ENCODE measurements at regions of chr6 and their contacts with region 1.

Region 1: DNA sequence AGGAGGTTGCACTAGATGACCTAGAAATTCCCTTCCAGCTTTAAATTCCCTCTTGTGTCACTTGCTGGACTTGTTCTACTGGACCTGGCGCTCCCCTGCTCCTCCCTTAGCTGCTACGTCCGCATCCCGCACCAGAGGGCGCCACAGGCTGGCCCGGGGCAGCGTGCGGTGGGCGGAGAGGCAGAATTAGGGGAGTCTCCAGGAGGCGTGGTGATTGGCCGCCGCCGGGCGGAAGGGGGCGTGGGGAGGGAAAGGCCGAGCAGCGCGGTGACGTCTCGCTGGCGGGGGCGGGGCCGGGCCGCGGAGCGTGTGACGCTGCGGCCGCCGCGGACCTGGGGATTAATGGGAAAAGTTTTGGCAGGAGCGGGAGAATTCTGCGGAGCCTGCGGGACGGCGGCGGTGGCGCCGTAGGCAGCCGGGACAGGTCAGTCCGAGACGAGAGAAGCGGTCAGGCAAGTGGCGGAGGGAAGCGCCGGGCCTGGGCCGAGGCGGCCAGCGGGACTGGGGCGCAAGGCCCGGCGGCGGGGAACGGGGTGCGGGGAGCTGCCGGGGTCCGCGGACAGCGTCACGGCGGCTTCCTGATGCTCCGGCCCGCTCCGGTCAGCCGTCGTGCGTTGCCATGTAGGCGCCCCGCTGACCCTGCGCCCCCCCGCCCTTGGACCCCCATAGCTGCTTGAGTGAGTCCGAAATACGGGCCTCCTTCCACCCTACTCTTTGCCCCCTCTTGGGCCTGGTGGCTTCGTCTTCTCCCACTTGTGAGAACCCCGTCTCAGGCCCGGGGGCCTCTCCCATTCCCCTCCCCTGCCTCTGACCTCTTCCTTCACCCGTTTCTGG is at the start of gene PPARD:
- DNase-seq: peak; percentile 97 to 98
- ATAC-seq: peak; percentile 88 to 92
- H3K4me3 ChIP-seq: peak within 1 kb of the TSS; percentile 64 to 93 (median 70)
- H3K27ac ChIP-seq: peak within 1 kb of the TSS; percentile 81 to 95 (median 94)
- H3K4me1 ChIP-seq: peaks cover 41 to 45% of the 10 kb centered on the region in 2 donors
- H3K27me3 ChIP-seq: no peaks in the 10 kb centered on the region
- CTCF ChIP-seq: peak; percentile 97 to 100 (median 99)
- POLR2A ChIP-seq: peak; percentile 96 to 97
- total RNA-seq, gene PPARD: 6.3 to 16.7 (median 12.0) TPM

Region 2: DNA sequence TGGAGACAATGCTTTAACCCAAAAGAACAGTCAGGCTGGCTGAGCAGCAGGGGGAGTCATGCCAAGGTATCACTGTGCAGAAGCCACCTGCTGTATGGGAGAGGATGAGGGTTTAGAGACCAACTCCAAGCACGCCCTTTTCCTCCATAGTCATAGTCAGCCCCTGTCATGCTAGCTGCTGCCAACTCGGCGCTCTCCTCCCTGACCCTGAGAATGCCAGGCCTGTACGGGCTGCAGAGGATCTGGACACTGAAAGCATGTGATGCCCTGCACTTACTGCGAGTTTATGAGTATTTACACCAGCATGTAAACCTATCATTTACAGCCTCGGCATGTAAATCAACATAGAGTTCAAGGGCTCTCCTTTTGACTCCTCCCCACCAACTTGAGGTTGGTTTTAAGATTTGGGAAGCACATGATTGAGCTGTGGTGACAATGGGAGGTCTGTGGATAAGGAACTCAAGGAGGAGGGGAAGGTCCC is 140.4 kb before region 1 on chr6:
- in situ Hi-C with region 1: no loop called
- intact Hi-C with region 1: no loop called
- DNase-seq: no peak
- ATAC-seq: no peak
- H3K4me3 ChIP-seq: no peak overlapping the region
- H3K27ac ChIP-seq: no peak overlapping the region
- H3K4me1 ChIP-seq: no peaks in the 10 kb centered on the region
- H3K27me3 ChIP-seq: peaks cover 0 to 13% (median 12%) of the 10 kb centered on the region in 3 donors
- CTCF ChIP-seq: no peak
- POLR2A ChIP-seq: no peak

Region 3: DNA sequence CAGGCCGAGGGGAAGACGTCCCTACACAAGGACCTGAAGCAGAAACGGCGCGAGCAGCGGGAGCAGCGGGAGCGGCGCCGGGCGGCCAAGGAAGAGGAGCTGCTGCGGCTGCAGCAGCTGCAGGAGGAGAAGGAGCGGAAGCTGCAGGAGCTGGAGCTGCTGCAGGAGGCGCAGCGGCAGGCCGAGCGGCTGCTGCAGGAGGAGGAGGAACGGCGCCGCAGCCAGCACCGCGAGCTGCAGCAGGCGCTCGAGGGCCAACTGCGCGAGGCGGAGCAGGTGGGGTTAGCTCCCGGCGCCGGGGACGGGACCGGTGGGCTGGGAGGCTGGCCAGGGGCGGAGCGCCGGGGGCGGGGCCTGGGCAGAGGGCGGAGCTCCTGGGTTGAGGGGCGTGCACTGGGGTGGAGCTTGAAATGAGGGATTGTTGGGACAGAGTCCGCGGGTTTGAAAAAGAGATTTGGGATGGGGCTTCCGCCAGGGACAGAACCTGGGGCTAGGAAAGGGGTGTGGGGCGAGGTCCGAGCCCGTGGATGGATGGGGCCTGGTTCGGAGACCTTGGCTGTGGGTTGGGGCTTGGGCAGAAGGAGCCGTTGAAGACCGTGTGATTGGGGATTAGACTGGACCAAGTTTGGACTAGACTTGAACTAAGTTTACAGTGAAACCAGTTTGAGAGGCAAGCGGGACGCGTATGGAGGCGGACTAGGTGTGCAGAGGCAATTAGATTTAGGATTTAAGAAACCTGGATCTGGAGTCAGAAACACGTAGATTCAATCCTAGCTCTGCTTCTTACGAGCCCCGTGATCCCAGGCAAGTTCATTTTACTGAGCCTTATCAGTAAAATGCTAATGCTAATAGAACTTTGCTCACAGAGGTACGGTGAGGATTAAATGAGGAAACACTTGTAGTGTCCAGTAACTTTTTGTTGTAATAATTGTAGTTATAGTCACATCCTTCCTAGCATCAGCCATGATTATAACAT is 24.0 kb before region 1 on chr6:
- in situ Hi-C with region 1: no loop called
- intact Hi-C with region 1: loop called (anchors 1 kb)
- DNase-seq: peak; percentile 56 to 78
- ATAC-seq: peak; percentile 91 to 94
- H3K4me3 ChIP-seq: peak overlapping the region; percentile 58 to 74 (median 68)
- H3K27ac ChIP-seq: peak overlapping the region; percentile 53 to 58 (median 54)
- H3K4me1 ChIP-seq: peaks cover 3 to 10% of the 10 kb centered on the region in 2 donors
- H3K27me3 ChIP-seq: no peaks in the 10 kb centered on the region
- CTCF ChIP-seq: peak in 2 of 5 experiments; percentile 14 to 20
- POLR2A ChIP-seq: peak in 1 of 2 donors; percentile 34

Region 4: GRCh38 chr6:35370124-35370741 is 27.8 kb after region 1 on chr6:
- in situ Hi-C with region 1: no loop called
- intact Hi-C with region 1: loop called (anchors 1 kb)
- DNase-seq: peak; percentile 92 to 98
- ATAC-seq: peak; percentile 92 to 95
- H3K4me3 ChIP-seq: peak overlapping the region in 2 of 4 donors; percentile 2 to 6
- H3K27ac ChIP-seq: peak overlapping the region; percentile 87 to 94 (median 92)
- H3K4me1 ChIP-seq: peaks cover 60 to 63% of the 10 kb centered on the region in 2 donors
- H3K27me3 ChIP-seq: no peaks in the 10 kb centered on the region
- CTCF ChIP-seq: peak in 1 of 5 experiments; percentile 26
- POLR2A ChIP-seq: peak; percentile 58 to 69

Region 5: GRCh38 chr6:35415065-35415991 is 72.9 kb after region 1 on chr6:
- in situ Hi-C with region 1: no loop called
- intact Hi-C with region 1: loop called (anchors 1 kb)
- DNase-seq: peak; percentile 65 to 78
- ATAC-seq: peak; percentile 92 to 97
- H3K4me3 ChIP-seq: no peak overlapping the region
- H3K27ac ChIP-seq: peak overlapping the region in 2 of 4 donors; percentile 7 to 48
- H3K4me1 ChIP-seq: peaks cover 10 to 16% of the 10 kb centered on the region in 2 donors
- H3K27me3 ChIP-seq: no peaks in the 10 kb centered on the region
- CTCF ChIP-seq: peak; percentile 41 to 79 (median 68)
- POLR2A ChIP-seq: no peak

Region 6: GRCh38 chr6:35427851-35428321 is 85.4 kb after region 1 on chr6:
- in situ Hi-C with region 1: no loop called
- intact Hi-C with region 1: no loop called
- DNase-seq: no peak
- ATAC-seq: no peak
- H3K4me3 ChIP-seq: no peak overlapping the region
- H3K27ac ChIP-seq: no peak overlapping the region
- H3K4me1 ChIP-seq: no peaks in the 10 kb centered on the region
- H3K27me3 ChIP-seq: no peaks in the 10 kb centered on the region
- CTCF ChIP-seq: no peak
- POLR2A ChIP-seq: no peak

Region 7: GRCh38 chr6:35452186-35453090 is 110.0 kb after region 1 on chr6 and contains the start of gene FANCE:
- in situ Hi-C with region 1: loop called (anchors 5 to 10 kb)
- intact Hi-C with region 1: loop called (anchors 1 kb)
- DNase-seq: peak; percentile 88 to 93
- ATAC-seq: peak; percentile 69 to 72
- H3K4me3 ChIP-seq: peak within 1 kb of the TSS; percentile 62 to 77 (median 72)
- H3K27ac ChIP-seq: peak within 1 kb of the TSS; percentile 81 to 89 (median 82)
- H3K4me1 ChIP-seq: peaks cover 34 to 40% of the 10 kb centered on the region in 2 donors
- H3K27me3 ChIP-seq: no peaks in the 10 kb centered on the region
- CTCF ChIP-seq: peak in 1 of 5 experiments; percentile 12
- POLR2A ChIP-seq: peak; percentile 80 to 86
- total RNA-seq, gene FANCE: 2.5 to 10.5 (median 5.9) TPM

Region 8: DNA sequence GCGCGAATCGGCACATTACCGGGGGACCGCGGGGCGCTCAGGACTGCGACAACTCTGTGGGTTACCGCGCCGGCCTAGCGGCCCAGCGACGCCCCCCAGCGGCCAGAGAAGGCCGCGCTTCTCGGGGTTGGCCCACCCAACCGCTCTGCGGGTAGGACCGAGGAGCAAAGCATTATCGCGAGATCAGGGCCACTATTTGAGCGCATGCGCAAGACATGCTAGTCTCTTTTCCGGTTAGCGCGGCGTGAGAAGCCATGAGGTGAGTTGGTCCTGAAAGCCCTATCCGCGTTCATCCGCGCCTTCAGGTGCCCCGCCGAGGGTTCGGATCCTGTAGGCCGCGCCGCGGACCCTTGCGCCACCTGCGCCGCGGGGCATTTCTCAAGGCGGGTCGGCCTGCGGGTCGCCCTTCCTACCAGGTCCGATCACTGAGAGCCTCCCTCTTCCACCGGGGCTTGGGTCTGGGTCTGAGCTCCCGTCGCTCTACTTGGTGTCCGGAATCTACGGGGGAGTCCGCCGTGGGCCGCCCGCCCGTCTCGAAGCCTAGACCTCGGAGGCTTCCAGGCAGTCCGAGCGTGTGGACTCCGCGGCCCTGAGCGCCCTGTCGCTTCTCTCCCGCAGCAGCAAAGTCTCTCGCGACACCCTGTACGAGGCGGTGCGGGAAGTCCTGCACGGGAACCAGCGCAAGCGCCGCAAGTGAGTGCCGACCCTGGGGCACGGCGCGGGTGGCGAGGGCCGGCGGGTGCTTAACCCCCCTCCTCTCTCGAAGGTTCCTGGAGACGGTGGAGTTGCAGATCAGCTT is 125.9 kb after region 1 on chr6 and contains the start of gene RPL10A:
- in situ Hi-C with region 1: no loop called
- intact Hi-C with region 1: loop called (anchors 1 kb)
- DNase-seq: peak; percentile 96 to 97
- ATAC-seq: peak; percentile 93 to 95
- H3K4me3 ChIP-seq: peak within 1 kb of the TSS; percentile 63 to 81 (median 72)
- H3K27ac ChIP-seq: peak within 1 kb of the TSS; percentile 87 to 92 (median 90)
- H3K4me1 ChIP-seq: peaks cover 21 to 32% of the 10 kb centered on the region in 2 donors
- H3K27me3 ChIP-seq: no peaks in the 10 kb centered on the region
- CTCF ChIP-seq: peak; percentile 98 to 99 (median 98)
- POLR2A ChIP-seq: peak; percentile 97 to 98
- total RNA-seq, gene RPL10A: 772 to 1,014 (median 808) TPM

Measured in gastrocnemius medialis (tissue), 4 donors.